ENCODE measurements at regions of chr10 and their contacts with region 1.

Region 1: GRCh38 chr10:102225646-102226541 is at the start of gene ELOVL3:
- DNase-seq: peak; percentile 91
- ATAC-seq: peak; percentile 91
- H3K4me3 Mint-ChIP-seq: peak within 1 kb of the TSS; percentile 37
- H3K27ac Mint-ChIP-seq: no peak within 1 kb of the TSS
- H3K4me1 Mint-ChIP-seq: peaks cover 16% of the 10 kb centered on the region
- H3K27me3 Mint-ChIP-seq: peaks cover 43% of the 10 kb centered on the region
- CTCF ChIP-seq: no peak
- total RNA-seq, gene ELOVL3: not detected

Region 2: GRCh38 chr10:101974091-101974971 is 251.6 kb before region 1 on chr10:
- CTCF ChIA-PET with region 1: no interaction called
- POLR2A ChIA-PET with region 1: no interaction called
- intact Hi-C with region 1: no loop called
- DNase-seq: peak; percentile 2
- ATAC-seq: no peak
- H3K4me3 Mint-ChIP-seq: peak overlapping the region; percentile 44
- H3K27ac Mint-ChIP-seq: peak overlapping the region; percentile 70
- H3K4me1 Mint-ChIP-seq: peaks cover 23% of the 10 kb centered on the region
- H3K27me3 Mint-ChIP-seq: no peaks in the 10 kb centered on the region
- CTCF ChIP-seq: no peak

Region 3: DNA sequence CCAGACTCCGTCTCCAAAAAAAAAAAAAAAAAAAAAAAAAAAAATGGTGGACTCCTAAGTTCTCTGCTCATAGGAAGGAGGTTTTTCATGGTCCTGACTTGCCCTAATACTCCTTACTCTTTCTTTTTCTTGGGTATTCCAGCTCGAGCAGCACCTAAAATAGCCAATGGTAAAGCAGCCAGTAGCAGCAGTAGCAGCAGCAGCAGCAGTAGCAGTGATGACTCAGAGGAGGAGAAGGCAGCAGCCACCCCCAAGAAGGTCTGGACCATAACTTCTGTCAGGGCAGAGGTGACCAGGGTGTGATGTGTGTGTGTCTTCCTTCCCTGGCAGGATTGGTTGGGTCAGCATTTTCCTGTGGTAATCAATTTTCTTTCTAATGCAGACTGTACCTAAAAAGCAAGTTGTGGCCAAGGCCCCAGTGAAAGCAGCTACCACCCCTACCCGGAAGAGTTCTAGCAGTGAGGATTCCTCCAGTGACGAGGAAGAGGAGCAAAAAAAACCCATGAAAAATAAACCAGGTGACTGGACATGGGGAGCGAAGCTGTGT is 66.8 kb before region 1 on chr10:
- CTCF ChIA-PET with region 1: interaction called, 12 read pairs
- POLR2A ChIA-PET with region 1: no interaction called
- intact Hi-C with region 1: no loop called
- DNase-seq: no peak
- ATAC-seq: no peak
- H3K4me3 Mint-ChIP-seq: no peak overlapping the region
- H3K27ac Mint-ChIP-seq: no peak overlapping the region
- H3K4me1 Mint-ChIP-seq: peaks cover 44% of the 10 kb centered on the region
- H3K27me3 Mint-ChIP-seq: no peaks in the 10 kb centered on the region
- CTCF ChIP-seq: no peak

Region 4: GRCh38 chr10:102245101-102245931 is 19.4 kb after region 1 on chr10 and contains the start of gene GBF1:
- CTCF ChIA-PET with region 1: interaction called, 59 read pairs
- POLR2A ChIA-PET with region 1: interaction called, 3 read pairs
- intact Hi-C with region 1: no loop called
- DNase-seq: peak; percentile 95
- ATAC-seq: peak; percentile 91
- H3K4me3 Mint-ChIP-seq: peak within 1 kb of the TSS; percentile 98
- H3K27ac Mint-ChIP-seq: peak within 1 kb of the TSS; percentile 94
- H3K4me1 Mint-ChIP-seq: peaks cover 46% of the 10 kb centered on the region
- H3K27me3 Mint-ChIP-seq: peaks cover 23% of the 10 kb centered on the region
- CTCF ChIP-seq: no peak
- total RNA-seq, gene GBF1: 25.4 to 28.2 TPM

Region 5: DNA sequence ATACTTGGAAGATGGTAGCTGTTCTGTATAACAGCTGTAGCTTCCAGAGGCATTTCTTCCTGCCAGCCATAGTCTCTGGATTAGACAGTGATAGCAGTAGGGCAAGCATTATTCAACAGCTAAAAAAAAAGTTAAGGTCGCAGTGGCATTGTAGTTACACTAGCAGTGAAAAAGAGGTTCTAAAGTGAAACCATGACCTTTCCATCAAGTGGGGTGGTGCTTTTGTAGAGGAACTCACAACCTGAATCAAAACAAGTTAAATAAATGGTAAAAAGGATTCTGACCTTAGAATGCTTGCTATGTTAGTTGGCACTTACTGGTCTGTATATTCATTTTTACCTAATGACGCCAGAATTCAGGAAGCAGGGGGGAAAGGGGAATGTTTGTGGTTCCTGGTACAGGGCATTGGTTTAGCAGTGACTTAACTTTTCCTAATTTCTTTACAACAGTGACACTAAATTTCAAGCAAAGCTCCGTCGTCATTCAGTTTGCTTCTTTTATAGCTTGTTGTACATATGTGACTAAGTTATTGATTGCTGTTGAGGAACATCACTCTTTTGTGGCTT is 74.5 kb after region 1 on chr10:
- CTCF ChIA-PET with region 1: interaction called, 12 read pairs
- POLR2A ChIA-PET with region 1: no interaction called
- intact Hi-C with region 1: no loop called
- DNase-seq: no peak
- ATAC-seq: peak; percentile 69
- H3K4me3 Mint-ChIP-seq: no peak overlapping the region
- H3K27ac Mint-ChIP-seq: peak overlapping the region; percentile 83
- H3K4me1 Mint-ChIP-seq: peaks cover 26% of the 10 kb centered on the region
- H3K27me3 Mint-ChIP-seq: no peaks in the 10 kb centered on the region
- CTCF ChIP-seq: no peak

Region 6: GRCh38 chr10:102352066-102352715 is 126.3 kb after region 1 on chr10:
- CTCF ChIA-PET with region 1: interaction called, 886 read pairs
- POLR2A ChIA-PET with region 1: interaction called, 4 read pairs
- intact Hi-C with region 1: loop called (anchors 1 kb)
- DNase-seq: peak; percentile 79
- ATAC-seq: peak; percentile 86
- H3K4me3 Mint-ChIP-seq: no peak overlapping the region
- H3K27ac Mint-ChIP-seq: no peak overlapping the region
- H3K4me1 Mint-ChIP-seq: peaks cover 6% of the 10 kb centered on the region
- H3K27me3 Mint-ChIP-seq: no peaks in the 10 kb centered on the region
- CTCF ChIP-seq: peak; percentile 98

Region 7: DNA sequence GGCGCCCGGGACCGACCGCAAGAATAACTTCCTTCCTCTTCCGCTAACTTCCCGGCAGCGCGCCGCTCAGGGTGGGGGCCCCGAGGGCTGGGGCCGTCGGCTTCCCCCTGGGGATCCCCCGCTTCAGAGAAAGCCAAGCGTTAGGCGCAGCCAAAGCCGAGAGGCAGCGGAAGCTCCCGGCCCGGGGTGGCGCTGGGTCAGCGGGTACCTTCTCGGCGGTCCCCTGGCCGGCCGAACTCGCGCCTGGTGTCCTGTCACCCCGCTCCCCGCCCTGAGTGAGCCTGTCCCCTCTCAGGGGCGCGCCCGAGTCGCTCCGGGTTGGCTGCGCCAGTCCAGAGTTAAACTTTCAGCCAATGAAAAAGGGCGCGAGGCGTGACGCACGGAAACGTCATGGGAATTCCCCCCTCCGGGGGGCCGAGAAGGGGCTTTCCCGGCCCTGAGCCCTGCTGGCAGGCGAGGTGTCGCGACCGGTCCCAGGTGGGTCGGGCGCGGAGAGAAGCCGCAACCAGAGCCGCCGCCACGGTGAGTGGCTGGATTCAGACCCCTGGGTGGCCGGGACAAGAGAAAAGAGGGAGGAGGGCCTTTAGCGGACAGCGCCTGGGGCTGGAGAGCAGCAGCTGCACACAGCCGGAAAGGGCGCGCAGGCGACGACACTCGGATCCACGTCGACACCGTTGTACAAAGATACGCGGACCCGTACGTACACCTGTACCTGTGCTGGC is 168.3 kb after region 1 on chr10:
- CTCF ChIA-PET with region 1: interaction called, 44 read pairs
- POLR2A ChIA-PET with region 1: interaction called, 7 read pairs
- intact Hi-C with region 1: no loop called
- DNase-seq: peak; percentile 98
- ATAC-seq: peak; percentile 85
- H3K4me3 Mint-ChIP-seq: peak overlapping the region; percentile 93
- H3K27ac Mint-ChIP-seq: peak overlapping the region; percentile 98
- H3K4me1 Mint-ChIP-seq: peaks cover 44% of the 10 kb centered on the region
- H3K27me3 Mint-ChIP-seq: no peaks in the 10 kb centered on the region
- CTCF ChIP-seq: no peak

Region 8: GRCh38 chr10:102461187-102462054 is 235.5 kb after region 1 on chr10:
- CTCF ChIA-PET with region 1: interaction called, 11 read pairs
- POLR2A ChIA-PET with region 1: no interaction called
- intact Hi-C with region 1: no loop called
- DNase-seq: peak; percentile 95
- ATAC-seq: peak; percentile 96
- H3K4me3 Mint-ChIP-seq: peak overlapping the region; percentile 91
- H3K27ac Mint-ChIP-seq: peak overlapping the region; percentile 80
- H3K4me1 Mint-ChIP-seq: peaks cover 27% of the 10 kb centered on the region
- H3K27me3 Mint-ChIP-seq: no peaks in the 10 kb centered on the region
- CTCF ChIP-seq: no peak

Measured in activated CD8-positive, alpha-beta T cell treated with anti-CD3 and anti-CD28 coated beads for 36 hours (primary cell).